ENCODE measurements at regions of chr1 and their contacts with region 1.

Region 1: DNA sequence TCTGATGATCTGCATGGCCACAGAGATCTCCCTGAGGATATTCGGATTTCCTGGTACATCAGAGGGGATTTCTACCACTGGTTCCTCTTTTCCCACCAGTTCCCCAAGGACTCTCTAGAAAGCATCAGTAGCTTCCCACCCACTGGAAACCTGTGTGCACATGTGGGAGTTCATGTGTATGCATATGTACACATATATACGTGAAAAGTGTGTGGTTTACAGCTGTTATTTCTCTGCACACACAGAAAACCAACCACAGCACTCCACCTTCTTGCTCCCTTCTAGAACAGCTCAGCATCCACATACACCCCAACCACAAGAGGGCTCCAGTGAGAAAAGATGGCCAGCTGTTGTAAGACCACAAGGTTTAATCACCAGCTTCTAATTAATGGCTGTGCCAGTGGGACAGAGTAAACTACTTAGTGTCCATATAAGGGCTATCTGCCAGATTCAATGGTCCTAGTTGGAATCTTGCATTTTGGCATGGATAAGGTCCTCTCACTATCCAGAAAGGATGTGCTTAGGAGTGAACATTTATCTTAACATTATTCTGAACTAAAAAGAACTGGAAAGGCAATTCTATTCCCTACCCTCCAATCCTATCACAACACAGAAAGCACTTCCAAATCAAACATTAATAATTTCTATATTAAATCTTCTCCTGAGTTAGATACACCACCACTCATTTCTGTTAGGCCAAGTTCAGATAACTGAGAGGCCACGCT is 24.1 kb downstream of the GPR3 start:
- DNase-seq: peak; percentile 64
- H3K4me3 ChIP-seq: no peak overlapping the region
- H3K27ac ChIP-seq: no peak overlapping the region
- H3K4me1 ChIP-seq: peaks cover 38% of the 10 kb centered on the region
- H3K27me3 ChIP-seq: no peaks in the 10 kb centered on the region
- CTCF ChIP-seq: peak; percentile 75 to 83

Region 2: DNA sequence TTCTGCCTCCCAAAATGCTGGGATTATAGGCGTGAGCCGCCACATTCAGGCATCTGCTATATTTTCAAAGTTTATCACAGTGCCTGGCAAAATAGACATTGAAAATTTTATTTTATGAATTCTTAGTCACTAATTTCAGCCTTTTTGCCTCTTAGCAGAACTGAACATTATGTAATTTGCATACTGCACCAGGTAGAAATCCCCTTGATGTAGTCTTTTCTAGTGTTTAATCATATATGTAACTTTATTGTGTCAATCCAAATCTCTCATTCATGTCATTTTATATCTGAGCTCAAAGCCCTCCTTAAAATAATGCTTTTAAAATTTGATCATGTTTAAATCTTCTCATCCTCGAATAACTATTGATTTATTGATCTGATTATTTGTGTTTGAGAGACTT is 163.0 kb before region 1 on chr1:
- CTCF ChIA-PET with region 1: no interaction called
- dilution Hi-C with region 1: no loop called
- in situ Hi-C with region 1: no loop called
- intact Hi-C with region 1: no loop called
- DNase-seq: no peak
- H3K4me3 ChIP-seq: no peak overlapping the region
- H3K27ac ChIP-seq: no peak overlapping the region
- H3K4me1 ChIP-seq: no peaks in the 10 kb centered on the region
- H3K27me3 ChIP-seq: no peaks in the 10 kb centered on the region
- CTCF ChIP-seq: no peak

Region 3: GRCh38 chr1:27473755-27474154 is 57.2 kb after region 1 on chr1:
- CTCF ChIA-PET with region 1: no interaction called
- dilution Hi-C with region 1: loop called (anchors 5 kb)
- in situ Hi-C with region 1: no loop called
- intact Hi-C with region 1: no loop called
- DNase-seq: no peak
- H3K4me3 ChIP-seq: no peak overlapping the region
- H3K27ac ChIP-seq: no peak overlapping the region
- H3K4me1 ChIP-seq: peaks cover 7% of the 10 kb centered on the region
- H3K27me3 ChIP-seq: no peaks in the 10 kb centered on the region
- CTCF ChIP-seq: no peak

Region 4: GRCh38 chr1:27522432-27523351 is 106.1 kb after region 1 on chr1:
- CTCF ChIA-PET with region 1: no interaction called
- dilution Hi-C with region 1: no loop called
- in situ Hi-C with region 1: no loop called
- intact Hi-C with region 1: loop called (anchors 1 kb)
- DNase-seq: peak; percentile 99
- H3K4me3 ChIP-seq: peak overlapping the region in 1 of 3 experiments; percentile 7
- H3K27ac ChIP-seq: peak overlapping the region; percentile 83
- H3K4me1 ChIP-seq: peaks cover 91% of the 10 kb centered on the region
- H3K27me3 ChIP-seq: no peaks in the 10 kb centered on the region
- CTCF ChIP-seq: peak; percentile 29 to 42

Region 5: DNA sequence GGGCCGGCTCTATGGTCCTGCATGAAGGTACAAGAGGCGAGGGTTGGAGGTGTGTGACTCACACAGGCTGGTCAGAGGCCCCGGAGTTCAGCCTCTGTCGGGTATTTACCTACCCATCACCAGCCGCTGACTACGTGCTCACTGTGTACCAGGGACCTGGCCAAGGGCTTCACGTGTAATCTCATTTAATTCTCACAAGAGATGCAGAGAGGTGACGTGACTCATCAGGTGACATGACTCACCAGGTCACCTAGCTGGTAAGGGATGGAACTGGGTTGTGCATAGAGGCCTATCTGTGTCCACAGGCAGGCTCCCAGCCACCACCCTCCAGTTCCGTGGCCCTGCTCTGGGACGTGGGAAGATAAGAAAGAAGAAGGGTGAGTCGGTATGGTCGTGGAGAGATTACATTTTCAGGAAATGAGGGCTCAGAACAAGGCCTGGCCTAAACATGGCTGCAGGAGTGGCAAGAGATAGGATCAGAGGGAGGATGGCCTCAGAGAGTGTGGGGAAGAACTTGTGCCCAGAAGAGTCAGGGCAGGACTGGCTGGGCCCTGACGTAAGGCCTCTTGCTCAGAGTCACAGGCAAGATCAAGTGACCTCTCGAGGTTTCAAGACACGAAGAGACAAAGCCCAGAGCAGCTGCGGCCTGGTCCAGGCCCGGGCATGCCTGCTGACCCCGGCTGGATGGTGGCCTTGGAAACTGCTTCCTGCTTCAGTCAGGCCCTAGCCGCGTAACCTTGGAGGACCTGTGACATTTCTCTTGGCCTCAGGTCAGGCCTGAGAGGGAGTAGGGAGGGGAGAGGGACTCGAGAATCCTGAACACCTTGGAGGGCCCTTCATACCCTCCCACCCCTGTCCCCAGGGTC is 126.1 kb after region 1 on chr1:
- CTCF ChIA-PET with region 1: interaction called, 29 read pairs
- dilution Hi-C with region 1: no loop called
- in situ Hi-C with region 1: no loop called
- intact Hi-C with region 1: loop called (anchors 5 kb)
- DNase-seq: peak; percentile 99
- H3K4me3 ChIP-seq: no peak overlapping the region
- H3K27ac ChIP-seq: peak overlapping the region; percentile 80
- H3K4me1 ChIP-seq: peaks cover 81% of the 10 kb centered on the region
- H3K27me3 ChIP-seq: no peaks in the 10 kb centered on the region
- CTCF ChIP-seq: no peak

Region 6: DNA sequence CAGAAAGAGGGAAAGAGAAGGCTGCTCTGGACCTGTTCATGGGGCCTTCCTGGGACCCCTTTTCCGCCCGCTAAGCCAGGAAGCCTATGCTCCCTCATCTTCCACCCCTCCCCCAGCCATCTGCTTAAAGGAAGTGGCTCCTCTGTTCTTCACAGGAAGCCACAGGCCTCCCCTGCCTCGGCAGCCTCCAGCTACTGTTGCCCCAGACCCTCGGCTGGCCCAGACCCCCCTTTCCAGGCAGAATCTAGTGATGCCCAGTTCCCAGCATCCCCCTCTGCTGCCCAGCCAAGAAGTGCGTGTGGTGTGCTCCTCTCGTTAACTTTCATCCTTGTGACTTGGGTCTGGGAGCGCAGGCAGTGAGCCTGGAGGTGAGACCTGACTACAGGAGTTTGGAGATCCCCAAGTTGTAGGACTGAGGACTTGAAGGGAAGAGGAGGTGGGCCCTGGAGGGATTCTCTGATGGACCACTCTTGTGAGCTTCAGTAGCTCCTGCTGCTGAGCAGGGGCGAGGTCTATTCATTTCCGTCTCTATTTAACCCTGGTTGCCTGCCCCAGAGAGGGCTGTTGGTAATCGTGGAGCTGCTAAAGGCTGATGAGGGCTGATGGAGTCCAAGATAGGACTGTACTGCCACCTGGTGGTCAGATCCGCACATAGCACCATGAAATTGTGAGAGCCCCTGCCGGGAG is 246.3 kb after region 1 on chr1:
- CTCF ChIA-PET with region 1: interaction called, 9 read pairs
- dilution Hi-C with region 1: no loop called
- in situ Hi-C with region 1: no loop called
- intact Hi-C with region 1: loop called (anchors 5 kb)
- DNase-seq: peak; percentile 62
- H3K4me3 ChIP-seq: no peak overlapping the region
- H3K27ac ChIP-seq: no peak overlapping the region
- H3K4me1 ChIP-seq: peaks cover 14% of the 10 kb centered on the region
- H3K27me3 ChIP-seq: no peaks in the 10 kb centered on the region
- CTCF ChIP-seq: peak; percentile 81

Region 7: GRCh38 chr1:27689423-27690173 is 273.0 kb after region 1 on chr1:
- CTCF ChIA-PET with region 1: no interaction called
- dilution Hi-C with region 1: no loop called
- in situ Hi-C with region 1: no loop called
- intact Hi-C with region 1: no loop called
- DNase-seq: no peak
- H3K4me3 ChIP-seq: no peak overlapping the region
- H3K27ac ChIP-seq: no peak overlapping the region
- H3K4me1 ChIP-seq: no peaks in the 10 kb centered on the region
- H3K27me3 ChIP-seq: no peaks in the 10 kb centered on the region
- CTCF ChIP-seq: no peak

Measured in mammary epithelial cell (primary cell).